ENCODE measurements at regions of chr2 and their contacts with region 1.

Region 1: GRCh38 chr2:54879598-54880332 is 156.3 kb downstream of the EML6 start:
- DNase-seq: no peak
- H3K4me3 ChIP-seq: no peak overlapping the region
- H3K27ac ChIP-seq: no peak overlapping the region
- H3K4me1 ChIP-seq: no peaks in the 10 kb centered on the region
- H3K27me3 ChIP-seq: no peaks in the 10 kb centered on the region
- CTCF ChIP-seq: no peak

Region 2: GRCh38 chr2:54115284-54116137 is 764.3 kb before region 1 on chr2 and contains the start of gene ACYP2:
- CTCF ChIA-PET with region 1: interaction called, 14 read pairs
- POLR2A ChIA-PET with region 1: no interaction called
- intact Hi-C with region 1: no loop called
- DNase-seq: peak; percentile 91 to 97
- H3K4me3 ChIP-seq: peak within 1 kb of the TSS; percentile 79
- H3K27ac ChIP-seq: peak within 1 kb of the TSS; percentile 96
- H3K4me1 ChIP-seq: peaks cover 6% of the 10 kb centered on the region
- H3K27me3 ChIP-seq: no peaks in the 10 kb centered on the region
- CTCF ChIP-seq: peak; percentile 55
- total RNA-seq, gene ACYP2: 23.9 and 25.9 TPM in 2 replicates

Region 3: GRCh38 chr2:54894467-54894866 is 14.7 kb after region 1 on chr2:
- CTCF ChIA-PET with region 1: no interaction called
- POLR2A ChIA-PET with region 1: no interaction called
- intact Hi-C with region 1: no loop called
- DNase-seq: no peak
- H3K4me3 ChIP-seq: no peak overlapping the region
- H3K27ac ChIP-seq: no peak overlapping the region
- H3K4me1 ChIP-seq: no peaks in the 10 kb centered on the region
- H3K27me3 ChIP-seq: no peaks in the 10 kb centered on the region
- CTCF ChIP-seq: no peak

Region 4: GRCh38 chr2:54927085-54927750 is 47.5 kb after region 1 on chr2:
- CTCF ChIA-PET with region 1: no interaction called
- POLR2A ChIA-PET with region 1: no interaction called
- intact Hi-C with region 1: no loop called
- DNase-seq: no peak
- H3K4me3 ChIP-seq: no peak overlapping the region
- H3K27ac ChIP-seq: no peak overlapping the region
- H3K4me1 ChIP-seq: no peaks in the 10 kb centered on the region
- H3K27me3 ChIP-seq: no peaks in the 10 kb centered on the region
- CTCF ChIP-seq: no peak